ENCODE measurements at regions of chr11 and their contacts with region 1.

Region 1: GRCh38 chr11:118380571-118380970 is 20.8 kb upstream of the ATP5MG start:
- DNase-seq: no peak
- ATAC-seq: no peak
- H3K4me3 ChIP-seq: no peak overlapping the region
- H3K4me3 Mint-ChIP-seq: no peak overlapping the region
- H3K27ac ChIP-seq: no peak overlapping the region
- H3K27ac Mint-ChIP-seq: peak overlapping the region in 1 of 2 donors; percentile 28
- H3K4me1 ChIP-seq: no peaks in the 10 kb centered on the region
- H3K4me1 Mint-ChIP-seq: no peaks in the 10 kb centered on the region
- H3K27me3 ChIP-seq: no peaks in the 10 kb centered on the region
- H3K27me3 Mint-ChIP-seq: no peaks in the 10 kb centered on the region

Region 2: DNA sequence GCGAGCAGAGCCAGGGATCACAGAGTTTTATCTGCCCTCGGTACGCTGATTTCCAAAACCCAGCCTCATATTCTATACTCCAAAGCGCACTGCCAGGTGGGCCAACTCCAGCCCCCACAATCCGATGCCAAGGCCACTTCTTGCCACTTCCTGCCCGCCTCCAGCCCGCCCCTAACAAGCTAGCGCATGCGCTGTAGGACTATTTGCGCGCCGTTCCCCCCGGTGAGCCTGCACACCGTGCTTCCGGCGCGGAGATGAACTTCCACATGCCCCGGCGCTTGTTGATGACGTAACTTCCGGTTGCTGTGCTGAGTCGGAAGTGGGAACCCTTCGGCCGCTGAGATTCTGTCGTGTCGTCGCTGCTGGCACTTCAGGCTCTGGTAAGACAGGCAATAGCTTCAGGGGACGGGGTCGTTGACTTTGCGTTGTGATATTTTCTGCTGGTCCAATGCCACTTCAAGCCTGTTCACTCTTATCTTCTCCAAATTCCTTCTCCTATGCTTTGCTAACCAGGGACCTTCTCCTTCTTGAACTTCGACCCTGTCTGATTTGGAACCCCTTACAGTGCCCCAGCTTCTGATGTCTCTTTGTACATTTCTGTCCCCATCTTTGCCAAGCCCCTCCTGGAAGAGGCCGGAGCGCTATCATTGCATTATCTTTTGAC is 21.1 kb before region 1 on chr11 and contains the start of gene UBE4A:
- CTCF ChIA-PET with region 1: interaction called in 1 of 2 experiments, 3 read pairs
- POLR2A ChIA-PET with region 1: interaction called, 8 to 21 read pairs
- DNase-seq: peak; percentile 89 to 99 (median 96)
- ATAC-seq: peak; percentile 91 to 96 (median 94)
- H3K4me3 ChIP-seq: peak within 1 kb of the TSS; percentile 71 to 88
- H3K4me3 Mint-ChIP-seq: peak within 1 kb of the TSS; percentile 98 to 99 (median 99)
- H3K27ac ChIP-seq: peak within 1 kb of the TSS; percentile 82
- H3K27ac Mint-ChIP-seq: peak within 1 kb of the TSS; percentile 97 to 99
- H3K4me1 ChIP-seq: peaks cover 14 to 30% of the 10 kb centered on the region in 2 experiments
- H3K4me1 Mint-ChIP-seq: peaks cover 49 to 52% (median 50%) of the 10 kb centered on the region in 3 donors
- H3K27me3 ChIP-seq: no peaks in the 10 kb centered on the region
- H3K27me3 Mint-ChIP-seq: no peaks in the 10 kb centered on the region
- total RNA-seq, gene UBE4A: 40.7 to 44.9 (median 41.8) TPM